Activated T-helper 1 cell treated with anti-CD3 and anti-CD28 coated beads, Interleukin-12 subunit alpha, Interleukin-12 subunit beta, Interleukin-2, Interleukin-4 antibody, amounts not matched to agents 30 ng/mL and 10 ng/mL and 1 ng/mL, durations not matched to agents 14 hours and 24 hours and 36 hours (primary cell): ENCODE measurements at regions of chr16 and their contacts with region 1.

Region 1: GRCh38 chr16:75432828-75433731 is at the start of gene CFDP1:
- DNase-seq: peak; percentile 93
- H3K4me3 Mint-ChIP-seq: peak within 1 kb of the TSS; percentile 85
- H3K27ac Mint-ChIP-seq: peak within 1 kb of the TSS; percentile 99
- H3K4me1 Mint-ChIP-seq: peaks cover 21% of the 10 kb centered on the region
- H3K27me3 Mint-ChIP-seq: no peaks in the 10 kb centered on the region
- total RNA-seq, gene CFDP1: 35.4 TPM in 2 replicates

Region 2: DNA sequence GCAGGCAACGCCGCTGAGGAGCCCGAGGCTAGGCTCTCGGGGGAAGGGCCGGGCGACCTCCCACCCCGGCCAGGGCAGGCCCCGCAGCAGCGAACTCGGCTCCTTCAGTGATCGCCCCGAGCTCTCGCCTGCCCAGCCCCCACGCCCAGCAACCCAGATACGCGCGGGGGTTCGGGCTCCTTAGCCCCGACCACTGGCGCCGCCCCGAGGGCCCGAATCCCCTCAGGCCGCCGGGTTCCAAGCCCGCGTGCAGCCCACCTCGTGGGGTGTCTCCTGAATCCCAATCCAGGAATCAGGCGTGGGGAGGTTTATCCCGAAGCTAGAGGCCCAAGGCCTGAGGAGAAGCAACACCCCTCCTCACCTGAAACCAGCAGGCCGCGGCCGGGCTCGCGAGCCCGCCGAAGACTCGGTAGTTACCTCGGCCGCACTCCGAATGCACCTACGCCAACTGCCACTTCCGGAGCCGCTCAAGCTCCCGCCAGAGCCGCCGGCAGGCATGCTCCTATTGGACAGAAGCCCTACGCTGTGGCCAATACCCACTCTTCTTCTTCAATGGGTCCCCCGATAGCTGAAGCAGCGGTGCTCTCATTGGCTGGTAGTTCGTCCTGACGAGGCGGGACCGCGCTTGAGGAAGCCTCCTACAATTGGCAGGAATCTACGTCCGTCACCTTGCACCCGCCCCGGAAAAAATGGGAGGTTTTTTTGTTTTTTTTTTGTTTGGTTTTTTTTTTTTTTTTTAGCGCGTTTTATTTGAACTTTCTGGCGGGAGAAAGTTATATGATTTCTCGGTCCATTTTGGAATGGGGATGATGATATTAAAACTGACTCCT is 766.4 kb before region 1 on chr16 and contains the start of gene RFWD3:
- intact Hi-C with region 1: loop called (anchors 10 kb)
- DNase-seq: peak; percentile 96
- H3K4me3 Mint-ChIP-seq: peak within 1 kb of the TSS; percentile 91
- H3K27ac Mint-ChIP-seq: peak within 1 kb of the TSS; percentile 96
- H3K4me1 Mint-ChIP-seq: peaks cover 43% of the 10 kb centered on the region
- H3K27me3 Mint-ChIP-seq: no peaks in the 10 kb centered on the region
- total RNA-seq, gene RFWD3: 112 and 116 TPM in 2 replicates

Region 3: GRCh38 chr16:75148311-75149195 is 284.5 kb before region 1 on chr16 and contains the start of gene ZFP1:
- intact Hi-C with region 1: loop called (anchors 1 kb)
- DNase-seq: peak; percentile 90
- H3K4me3 Mint-ChIP-seq: peak within 1 kb of the TSS; percentile 90
- H3K27ac Mint-ChIP-seq: peak within 1 kb of the TSS; percentile 84
- H3K4me1 Mint-ChIP-seq: peaks cover 29% of the 10 kb centered on the region
- H3K27me3 Mint-ChIP-seq: no peaks in the 10 kb centered on the region
- total RNA-seq, gene ZFP1: 12.3 and 14.6 TPM in 2 replicates

Region 4: DNA sequence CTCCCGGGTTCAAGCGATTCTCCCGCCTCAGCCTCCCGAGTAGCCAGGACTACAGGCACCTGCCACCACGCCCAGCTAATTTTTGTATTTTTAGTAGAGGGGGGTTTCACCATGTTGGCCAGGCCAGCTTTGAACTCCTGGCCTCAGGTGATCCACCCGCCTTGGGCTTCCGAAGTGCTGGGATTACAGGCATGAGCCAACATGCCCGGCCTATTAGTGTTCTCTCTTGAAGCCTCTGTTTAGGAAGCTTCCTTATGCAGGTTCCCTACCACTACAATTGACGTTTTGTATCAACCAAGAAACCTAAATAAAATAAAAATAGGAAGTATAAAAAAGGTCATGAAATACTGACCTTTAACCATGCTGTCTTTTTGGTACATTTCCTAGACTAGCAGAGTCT is 86.8 kb after region 1 on chr16:
- intact Hi-C with region 1: loop called (anchors 1 kb)
- DNase-seq: no peak
- H3K4me3 Mint-ChIP-seq: no peak overlapping the region
- H3K27ac Mint-ChIP-seq: no peak overlapping the region
- H3K4me1 Mint-ChIP-seq: peaks cover 5% of the 10 kb centered on the region
- H3K27me3 Mint-ChIP-seq: peaks cover 5% of the 10 kb centered on the region

Region 5: DNA sequence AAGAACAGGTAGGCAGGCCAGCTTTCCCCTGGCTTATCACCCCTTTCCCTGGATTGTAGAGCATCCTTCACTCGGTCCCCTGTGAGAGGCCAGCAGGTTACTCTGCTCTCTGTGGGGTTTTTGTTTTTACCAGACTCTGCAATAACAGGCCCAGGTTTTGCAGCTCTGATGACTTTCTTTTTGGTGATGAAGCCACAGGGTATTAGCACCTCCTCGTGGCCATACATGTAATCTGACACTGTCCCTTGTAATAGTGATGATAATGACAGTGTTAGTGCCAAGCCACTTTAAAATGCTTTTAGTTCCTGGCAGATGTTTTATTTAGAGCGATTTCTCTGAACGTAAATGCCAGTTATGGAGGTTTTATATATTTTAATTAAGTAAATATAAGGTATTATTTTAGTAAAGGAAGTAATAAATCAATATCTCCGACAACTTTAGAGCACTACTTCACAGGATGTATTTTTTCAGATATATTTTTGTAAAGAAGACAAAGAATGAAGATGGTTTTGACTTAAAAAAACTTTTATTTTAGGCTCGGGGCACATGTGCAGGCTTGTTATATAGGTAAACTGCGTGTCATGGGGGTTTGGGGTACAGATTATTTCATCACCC is 331.2 kb after region 1 on chr16:
- intact Hi-C with region 1: loop called (anchors 1 kb)
- DNase-seq: peak; percentile 35
- H3K4me3 Mint-ChIP-seq: no peak overlapping the region
- H3K27ac Mint-ChIP-seq: no peak overlapping the region
- H3K4me1 Mint-ChIP-seq: no peaks in the 10 kb centered on the region
- H3K27me3 Mint-ChIP-seq: peaks cover 12% of the 10 kb centered on the region